ENCODE measurements at regions of chr1 and their contacts with region 1.

Region 1: DNA sequence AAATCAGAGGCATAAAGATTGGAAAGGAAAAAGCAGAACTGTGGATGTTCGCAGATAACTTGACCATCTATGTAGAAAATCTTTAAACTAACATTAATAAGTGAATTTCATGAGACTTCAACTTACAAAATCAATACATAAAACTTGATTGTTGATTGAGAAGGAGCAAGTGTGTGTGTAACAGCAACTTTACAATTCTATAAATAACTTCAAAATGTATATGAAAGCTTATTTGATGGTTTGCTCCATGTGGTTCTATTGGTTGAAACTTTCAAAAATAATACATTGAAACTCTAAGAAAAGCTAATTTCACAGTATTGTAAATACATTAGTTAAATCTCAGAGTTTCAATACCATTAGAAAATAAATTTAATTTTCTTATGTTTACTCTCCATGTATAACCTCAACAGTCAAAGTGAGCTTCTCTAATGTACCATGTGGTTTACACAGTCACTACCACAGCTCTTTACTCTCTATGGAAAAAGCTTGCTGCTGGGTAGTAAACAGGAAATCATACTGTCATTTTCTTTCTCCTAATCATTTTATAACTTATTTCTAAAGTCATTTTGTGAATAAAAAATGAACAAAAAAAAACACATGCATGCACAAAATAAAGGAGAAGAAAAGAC is 12.0 kb downstream of the AKT3 start:
- DNase-seq: peak in 3 of 14 experiments; percentile 54 to 81 (median 58)
- ATAC-seq: peak; percentile 94
- H3K4me3 ChIP-seq: no peak overlapping the region
- H3K4me3 Mint-ChIP-seq: peak overlapping the region; percentile 54
- H3K27ac ChIP-seq: peak overlapping the region; percentile 35 to 47
- H3K27ac Mint-ChIP-seq: peak overlapping the region; percentile 91
- H3K4me1 ChIP-seq: peaks cover 2% of the 10 kb centered on the region
- H3K4me1 Mint-ChIP-seq: peaks cover 77% of the 10 kb centered on the region
- H3K27me3 ChIP-seq: no peaks in the 10 kb centered on the region
- H3K27me3 Mint-ChIP-seq: no peaks in the 10 kb centered on the region
- CTCF ChIP-seq: no peak

Region 2: DNA sequence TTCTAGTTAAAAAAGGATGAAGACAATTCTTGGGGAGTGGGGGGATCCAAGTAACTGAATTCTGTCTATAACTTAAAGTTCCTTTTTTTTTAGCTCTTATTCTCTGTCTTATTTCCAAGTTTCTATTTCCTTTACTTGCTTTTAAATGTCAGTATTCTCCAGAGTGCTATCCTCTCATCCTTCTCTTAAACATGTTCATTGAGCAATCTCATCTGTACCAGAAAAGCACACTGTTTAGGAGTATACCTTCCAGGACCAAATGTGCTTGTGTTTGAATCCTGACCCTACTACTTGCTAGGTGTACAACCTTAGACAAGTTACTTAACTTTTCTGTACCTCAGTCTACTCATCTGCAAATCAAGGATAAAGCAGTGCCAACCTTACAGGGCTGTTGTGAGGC is 38.1 kb before region 1 on chr1:
- CTCF ChIA-PET with region 1: no interaction called
- POLR2A ChIA-PET with region 1: no interaction called
- intact Hi-C with region 1: loop called in 1 of 2 experiments (anchors 5 kb)
- DNase-seq: no peak
- ATAC-seq: no peak
- H3K4me3 ChIP-seq: no peak overlapping the region
- H3K4me3 Mint-ChIP-seq: no peak overlapping the region
- H3K27ac ChIP-seq: no peak overlapping the region
- H3K27ac Mint-ChIP-seq: no peak overlapping the region
- H3K4me1 ChIP-seq: peaks cover 12% of the 10 kb centered on the region
- H3K4me1 Mint-ChIP-seq: peaks cover 49% of the 10 kb centered on the region
- H3K27me3 ChIP-seq: no peaks in the 10 kb centered on the region
- H3K27me3 Mint-ChIP-seq: no peaks in the 10 kb centered on the region
- CTCF ChIP-seq: no peak

Region 3: DNA sequence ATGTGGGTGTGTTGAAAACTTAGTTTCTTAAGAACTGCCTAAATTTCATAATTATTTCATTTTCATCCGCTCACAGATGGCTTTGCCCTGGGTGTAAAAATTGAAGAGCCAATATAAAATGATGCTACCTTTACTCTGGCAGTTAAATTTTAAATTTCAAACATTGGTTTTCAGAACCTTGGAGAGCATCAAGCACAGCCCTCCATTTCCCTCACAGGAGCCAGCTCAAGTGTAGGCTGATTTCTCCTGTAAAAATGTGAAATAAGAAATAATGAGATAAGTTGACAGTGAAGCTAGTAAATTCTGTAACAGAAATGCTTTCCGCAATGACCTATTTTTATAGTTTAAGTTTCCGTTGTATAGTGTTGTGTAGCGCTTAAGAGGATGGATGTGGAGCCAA is 65.9 kb after region 1 on chr1:
- CTCF ChIA-PET with region 1: no interaction called
- POLR2A ChIA-PET with region 1: no interaction called
- intact Hi-C with region 1: no loop called
- DNase-seq: no peak
- ATAC-seq: no peak
- H3K4me3 ChIP-seq: no peak overlapping the region
- H3K4me3 Mint-ChIP-seq: no peak overlapping the region
- H3K27ac ChIP-seq: no peak overlapping the region
- H3K27ac Mint-ChIP-seq: no peak overlapping the region
- H3K4me1 ChIP-seq: no peaks in the 10 kb centered on the region
- H3K4me1 Mint-ChIP-seq: no peaks in the 10 kb centered on the region
- H3K27me3 ChIP-seq: no peaks in the 10 kb centered on the region
- H3K27me3 Mint-ChIP-seq: peaks cover 27% of the 10 kb centered on the region
- CTCF ChIP-seq: no peak

Measured in CD4-positive, alpha-beta T cell (primary cell).